ENCODE measurements at regions of chr16 and their contacts with region 1.

Region 1: DNA sequence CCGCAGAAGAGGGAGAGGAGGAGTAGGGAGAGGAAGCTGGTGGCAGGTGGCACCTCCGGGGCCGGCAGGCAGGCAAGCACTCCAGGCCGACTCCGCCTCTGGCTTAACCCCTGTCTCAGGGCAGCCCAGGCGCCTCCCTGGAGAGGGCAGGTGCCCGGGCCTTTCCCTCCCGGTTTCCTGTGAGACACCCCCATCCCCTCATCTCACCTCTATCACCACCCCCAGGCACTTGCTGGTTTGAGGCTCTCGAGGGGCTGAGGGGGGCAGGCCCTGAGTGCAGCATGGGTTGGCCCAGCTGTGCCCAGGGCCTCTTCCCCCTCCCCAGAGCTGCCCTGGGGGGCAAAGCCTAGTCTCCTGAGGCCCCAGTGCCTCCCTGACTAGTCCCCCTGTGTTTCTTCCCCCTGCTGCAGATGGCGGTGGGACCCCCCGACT is 6.0 kb downstream of the DOC2A start:
- DNase-seq: no peak

Region 2: DNA sequence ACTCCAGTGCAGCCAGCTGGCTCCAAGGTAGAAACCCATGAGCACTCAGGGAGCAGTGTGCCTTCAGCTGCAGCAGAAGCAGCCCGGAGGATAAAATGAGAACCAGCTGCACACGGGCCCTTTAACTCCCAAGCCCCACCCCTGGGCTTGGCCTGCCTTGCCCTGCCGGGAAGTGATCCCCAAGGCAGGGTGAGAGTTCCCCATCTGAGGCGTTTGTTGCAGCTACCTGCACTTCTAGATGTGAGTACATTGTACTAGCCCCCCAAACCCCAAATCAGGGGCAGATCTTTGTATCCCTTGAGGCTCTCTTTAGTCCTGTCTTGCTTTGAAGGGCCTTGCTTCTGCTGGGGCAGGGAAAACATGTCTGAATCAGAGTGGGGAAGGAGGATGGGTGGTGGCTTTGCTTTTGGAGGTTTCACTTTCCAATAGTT is 184.5 kb before region 1 on chr16 and contains the start of gene MVP:
- intact Hi-C with region 1: loop called in 1 of 2 experiments (anchors 5 kb)
- DNase-seq: peak; percentile 91
- total RNA-seq, gene MVP: 146 to 154 TPM

Region 3: DNA sequence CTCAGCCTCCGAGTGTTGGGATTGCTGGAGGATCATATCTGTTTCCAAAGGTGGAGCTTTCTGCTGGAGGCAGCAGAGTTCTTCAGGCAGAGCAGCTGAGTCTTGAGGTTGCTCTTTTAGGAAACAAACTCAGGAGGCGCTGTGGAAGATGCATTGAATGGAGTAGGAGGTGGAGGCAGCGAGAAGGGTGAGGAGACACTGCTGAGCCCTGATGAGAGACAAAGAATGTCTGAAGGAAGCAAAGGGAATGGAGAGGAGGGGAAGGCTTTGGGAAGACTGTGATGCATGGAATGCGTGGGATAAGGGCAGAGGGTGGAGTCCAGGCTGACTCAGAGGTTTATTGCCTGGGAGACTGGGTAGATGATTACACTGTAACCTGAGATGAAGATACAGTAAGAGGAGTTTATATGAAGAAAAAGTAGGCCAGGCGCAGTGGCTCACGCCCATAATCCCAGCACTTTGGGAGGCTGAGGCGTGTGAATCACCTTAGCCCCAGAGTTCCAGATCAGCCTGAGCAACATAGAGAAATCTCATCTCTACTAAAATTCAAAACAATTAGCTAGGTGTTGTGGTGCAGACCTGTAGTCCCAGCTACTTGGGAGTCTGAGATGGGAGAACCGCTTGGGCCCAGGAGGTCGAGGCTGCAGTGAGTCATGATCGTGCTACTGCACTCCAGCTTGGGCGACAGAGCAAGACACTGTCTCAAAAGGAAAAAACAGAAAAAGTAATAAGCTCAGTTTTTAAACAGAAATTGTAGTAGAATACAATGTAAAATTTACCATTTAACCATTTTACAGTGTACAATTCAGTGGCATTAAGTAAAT is 60.8 kb before region 1 on chr16:
- intact Hi-C with region 1: no loop called
- DNase-seq: peak; percentile 83